Naive thymus-derived CD4-positive, alpha-beta T cell (primary cell): ENCODE measurements at regions of chr17 and their contacts with region 1.

Region 1: GRCh38 chr17:42459256-42459800 is 650 bp downstream of the ATP6V0A1 start:
- DNase-seq: peak in 6 of 9 donors; percentile 10 to 27 (median 16)
- ATAC-seq: no peak
- H3K4me3 ChIP-seq: peak overlapping the region; percentile 86
- H3K4me3 Mint-ChIP-seq: peak overlapping the region; percentile 88 to 97 (median 92)
- H3K27ac ChIP-seq: peak overlapping the region; percentile 66
- H3K27ac Mint-ChIP-seq: peak overlapping the region; percentile 68 to 95 (median 92)
- H3K4me1 ChIP-seq: peaks cover 36 to 39% of the 10 kb centered on the region in 2 donors
- H3K4me1 Mint-ChIP-seq: peaks cover 24 to 47% (median 40%) of the 10 kb centered on the region in 7 donors
- H3K27me3 ChIP-seq: no peaks in the 10 kb centered on the region
- H3K27me3 Mint-ChIP-seq: peaks cover 0 to 20% (median 0%) of the 10 kb centered on the region in 5 donors

Region 2: GRCh38 chr17:42422958-42423712 is 36.2 kb before region 1 on chr17 and contains the start of gene CAVIN1:
- CTCF ChIA-PET with region 1: no interaction called
- POLR2A ChIA-PET with region 1: no interaction called
- intact Hi-C with region 1: loop called in 1 of 2 experiments (anchors 5 kb)
- DNase-seq: peak in 1 of 9 donors; percentile 49
- ATAC-seq: peak; percentile 38
- H3K4me3 ChIP-seq: peak within 1 kb of the TSS; percentile 65
- H3K4me3 Mint-ChIP-seq: peak within 1 kb of the TSS; percentile 83 to 96 (median 88)
- H3K27ac ChIP-seq: no peak within 1 kb of the TSS
- H3K27ac Mint-ChIP-seq: peak within 1 kb of the TSS in 5 of 9 donors; percentile 28 to 69 (median 46)
- H3K4me1 ChIP-seq: peaks cover 0 to 14% of the 10 kb centered on the region in 2 donors
- H3K4me1 Mint-ChIP-seq: peaks cover 6 to 29% (median 14%) of the 10 kb centered on the region in 7 donors
- H3K27me3 ChIP-seq: peaks cover 6 to 9% of the 10 kb centered on the region in 2 donors
- H3K27me3 Mint-ChIP-seq: peaks cover 0 to 65% (median 14%) of the 10 kb centered on the region in 5 donors
- total RNA-seq, gene CAVIN1: 0.32 to 3.8 (median 1.1) TPM in 3 of 5 experiments, not detected in the others

Region 3: DNA sequence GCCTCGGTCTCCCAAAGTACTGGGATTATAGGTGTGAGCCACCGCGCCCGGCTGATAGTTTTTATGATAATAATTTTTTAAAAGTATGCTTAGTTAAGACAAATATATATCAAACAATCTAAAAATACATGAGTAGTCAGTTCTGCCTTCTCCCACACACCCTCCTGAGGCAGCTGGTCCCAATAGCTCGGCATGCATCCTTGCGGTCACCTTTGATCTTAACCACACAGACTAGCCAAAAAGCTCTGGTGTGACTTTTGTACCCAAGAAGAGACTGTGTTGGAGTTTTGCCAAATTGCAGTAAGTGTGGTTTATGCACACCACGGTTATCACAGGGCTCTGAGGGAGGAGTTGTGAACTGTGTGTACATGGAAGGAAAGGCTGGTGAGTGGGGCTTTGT is 25.0 kb after region 1 on chr17:
- CTCF ChIA-PET with region 1: interaction called, 3 read pairs
- POLR2A ChIA-PET with region 1: interaction called, 3 read pairs
- intact Hi-C with region 1: loop called (anchors 1 kb)
- DNase-seq: peak in 8 of 9 donors; percentile 63 to 75 (median 72)
- ATAC-seq: peak; percentile 95
- H3K4me3 ChIP-seq: no peak overlapping the region
- H3K4me3 Mint-ChIP-seq: peak overlapping the region in 8 of 10 donors; percentile 54 to 80 (median 60)
- H3K27ac ChIP-seq: no peak overlapping the region
- H3K27ac Mint-ChIP-seq: peak overlapping the region; percentile 9 to 70 (median 60)
- H3K4me1 ChIP-seq: peaks cover 17 to 30% of the 10 kb centered on the region in 2 donors
- H3K4me1 Mint-ChIP-seq: peaks cover 17 to 43% (median 33%) of the 10 kb centered on the region in 7 donors
- H3K27me3 ChIP-seq: no peaks in the 10 kb centered on the region
- H3K27me3 Mint-ChIP-seq: peaks cover 0 to 7% (median 0%) of the 10 kb centered on the region in 5 donors

Region 4: DNA sequence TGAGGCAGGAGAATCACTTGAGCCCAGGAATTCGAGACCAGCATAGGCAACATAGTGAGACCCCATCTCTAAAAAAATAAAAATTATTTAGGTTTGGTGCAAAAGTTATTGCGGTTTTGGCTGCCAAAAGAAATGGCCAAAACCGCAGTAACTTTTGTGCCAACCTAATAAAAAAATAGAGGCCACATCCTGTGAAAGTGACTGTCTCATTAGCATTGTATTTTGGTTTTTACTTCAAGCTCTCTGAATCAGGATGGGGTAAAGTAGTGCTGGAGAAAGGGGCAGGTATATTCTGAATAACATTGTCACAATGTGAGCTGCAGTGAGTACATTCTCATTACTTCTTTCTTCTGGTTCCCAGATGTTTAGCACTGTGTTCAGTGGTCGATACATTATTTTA is 35.3 kb after region 1 on chr17:
- CTCF ChIA-PET with region 1: no interaction called
- POLR2A ChIA-PET with region 1: no interaction called
- intact Hi-C with region 1: no loop called
- DNase-seq: no peak
- ATAC-seq: no peak
- H3K4me3 ChIP-seq: no peak overlapping the region
- H3K4me3 Mint-ChIP-seq: no peak overlapping the region
- H3K27ac ChIP-seq: no peak overlapping the region
- H3K27ac Mint-ChIP-seq: no peak overlapping the region
- H3K4me1 ChIP-seq: peaks cover 0 to 7% of the 10 kb centered on the region in 2 donors
- H3K4me1 Mint-ChIP-seq: peaks cover 0 to 7% (median 2%) of the 10 kb centered on the region in 7 donors
- H3K27me3 ChIP-seq: no peaks in the 10 kb centered on the region
- H3K27me3 Mint-ChIP-seq: peaks cover 0 to 3% (median 2%) of the 10 kb centered on the region in 5 donors